Activated CD4-positive, alpha-beta memory T cell treated with anti-CD3 and anti-CD28 coated beads for 36 hours (primary cell): ENCODE measurements at regions of chrX and their contacts with region 1.

Region 1: GRCh38 chrX:47523297-47523696 is 37.7 kb upstream of the ARAF start:
- DNase-seq: peak; percentile 86
- H3K4me3 Mint-ChIP-seq: peak overlapping the region; percentile 60
- H3K27ac Mint-ChIP-seq: no peak overlapping the region
- H3K4me1 Mint-ChIP-seq: no peaks in the 10 kb centered on the region
- H3K27me3 Mint-ChIP-seq: no peaks in the 10 kb centered on the region

Region 2: DNA sequence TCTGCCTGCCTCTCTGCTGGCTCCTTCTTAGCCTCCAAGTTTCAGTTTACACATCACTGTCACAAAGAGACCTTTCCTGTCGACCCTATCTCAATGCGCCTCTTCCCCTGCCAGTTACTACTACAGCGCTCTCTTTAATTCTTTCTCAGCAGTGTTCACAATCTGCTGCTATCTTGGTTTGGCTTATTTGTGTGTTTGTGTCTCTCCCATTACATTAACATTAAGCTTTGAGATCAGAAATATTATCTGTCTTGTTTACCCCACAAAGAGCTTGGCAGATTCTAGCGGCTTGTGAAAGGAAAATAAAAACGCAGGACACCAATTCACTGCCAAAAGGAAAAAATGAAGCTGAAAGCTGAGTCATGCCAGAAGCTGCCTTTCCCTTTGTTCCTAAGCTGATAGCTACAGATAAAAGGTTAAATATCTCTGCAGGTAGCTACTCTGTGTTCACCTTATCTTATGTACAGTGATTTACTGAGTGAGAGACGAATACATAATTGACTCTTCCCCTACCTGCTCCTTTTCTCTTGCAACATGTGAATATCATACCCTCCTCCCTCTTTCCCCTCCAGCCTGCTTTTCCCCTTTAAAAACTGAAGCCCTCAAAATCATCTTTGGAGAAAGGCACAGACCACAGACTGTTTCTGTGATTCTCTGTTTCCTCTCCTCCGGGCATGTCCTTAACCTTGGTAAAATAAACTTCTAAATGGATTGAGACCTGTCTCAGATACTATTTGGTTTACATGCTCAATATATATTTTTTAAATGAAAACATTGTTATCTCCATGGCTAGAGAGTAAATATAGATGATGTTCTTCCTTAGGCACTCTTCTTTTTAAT is 745.1 kb before region 1 on chrX:
- CTCF ChIA-PET with region 1: no interaction called
- POLR2A ChIA-PET with region 1: no interaction called
- intact Hi-C with region 1: no loop called
- DNase-seq: no peak
- H3K4me3 Mint-ChIP-seq: no peak overlapping the region
- H3K27ac Mint-ChIP-seq: no peak overlapping the region
- H3K4me1 Mint-ChIP-seq: peaks cover 12% of the 10 kb centered on the region
- H3K27me3 Mint-ChIP-seq: no peaks in the 10 kb centered on the region

Region 3: GRCh38 chrX:47311932-47312774 is 211.1 kb before region 1 on chrX:
- CTCF ChIA-PET with region 1: interaction called, 3 read pairs
- POLR2A ChIA-PET with region 1: no interaction called
- intact Hi-C with region 1: loop called (anchors 5 kb)
- DNase-seq: peak; percentile 73
- H3K4me3 Mint-ChIP-seq: no peak overlapping the region
- H3K27ac Mint-ChIP-seq: no peak overlapping the region
- H3K4me1 Mint-ChIP-seq: no peaks in the 10 kb centered on the region
- H3K27me3 Mint-ChIP-seq: no peaks in the 10 kb centered on the region

Region 4: GRCh38 chrX:47482512-47483309 is 40.6 kb before region 1 on chrX and contains the start of gene ZNF41:
- CTCF ChIA-PET with region 1: interaction called, 4 read pairs
- POLR2A ChIA-PET with region 1: no interaction called
- intact Hi-C with region 1: loop called (anchors 5 kb)
- DNase-seq: peak; percentile 80
- H3K4me3 Mint-ChIP-seq: peak within 1 kb of the TSS; percentile 86
- H3K27ac Mint-ChIP-seq: peak within 1 kb of the TSS; percentile 95
- H3K4me1 Mint-ChIP-seq: peaks cover 29% of the 10 kb centered on the region
- H3K27me3 Mint-ChIP-seq: no peaks in the 10 kb centered on the region
- total RNA-seq, gene ZNF41: 8.4 to 8.7 TPM

Region 5: GRCh38 chrX:47497273-47497672 is 26.0 kb before region 1 on chrX:
- CTCF ChIA-PET with region 1: interaction called, 8 read pairs
- POLR2A ChIA-PET with region 1: no interaction called
- intact Hi-C with region 1: loop called (anchors 1 kb)
- DNase-seq: no peak
- H3K4me3 Mint-ChIP-seq: no peak overlapping the region
- H3K27ac Mint-ChIP-seq: no peak overlapping the region
- H3K4me1 Mint-ChIP-seq: no peaks in the 10 kb centered on the region
- H3K27me3 Mint-ChIP-seq: no peaks in the 10 kb centered on the region